Esophagus muscularis mucosa (tissue), 4 donors: ENCODE measurements at regions of chr17 and their contacts with region 1.

Region 1: DNA sequence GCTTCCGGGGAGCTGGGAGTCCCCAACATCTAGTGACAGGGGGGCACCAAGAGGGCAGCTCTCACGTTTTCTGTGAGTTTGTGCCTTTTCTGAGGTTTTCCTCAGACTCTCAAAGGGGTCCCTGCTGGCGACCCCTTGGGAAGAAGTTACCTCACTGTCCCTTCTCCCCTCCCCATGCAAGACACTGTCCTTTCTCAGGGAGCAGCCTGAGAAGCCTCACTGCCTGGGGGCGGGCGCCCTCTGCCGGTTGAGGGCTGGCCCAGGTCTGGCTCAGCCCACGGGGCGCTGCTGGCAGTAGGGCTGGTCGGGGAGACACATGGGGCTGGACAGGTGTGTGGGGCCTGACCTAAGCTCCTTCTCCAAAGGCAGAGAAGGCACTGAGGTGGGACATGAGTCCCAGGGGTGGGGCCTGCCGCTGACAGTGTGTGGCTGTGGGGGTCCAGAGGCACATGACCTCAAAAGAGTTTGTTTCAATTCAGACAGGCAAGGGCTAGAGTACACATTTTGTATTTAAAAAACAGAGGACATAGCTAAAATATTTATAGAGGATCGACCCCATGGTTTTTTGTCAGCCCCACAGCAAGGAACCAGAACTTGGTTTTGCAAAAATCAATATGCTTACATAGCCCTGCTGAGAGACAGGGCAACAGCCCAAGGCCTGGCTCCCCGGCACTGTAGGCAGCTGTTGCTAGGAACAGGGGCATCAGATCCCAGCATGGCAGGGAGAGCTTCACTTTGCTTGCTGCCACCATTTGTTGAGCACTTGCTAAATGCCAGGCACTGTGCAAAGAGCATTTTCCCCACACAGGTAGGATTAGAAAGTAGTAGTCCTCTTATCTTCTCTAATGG is 18.5 kb upstream of the ALDH3A1 start:
- DNase-seq: peak; percentile 92
- H3K4me3 ChIP-seq: no peak overlapping the region
- H3K27ac ChIP-seq: no peak overlapping the region
- H3K4me1 ChIP-seq: peaks cover 0 to 31% (median 18%) of the 10 kb centered on the region in 4 donors
- H3K27me3 ChIP-seq: no peaks in the 10 kb centered on the region
- CTCF ChIP-seq: peak in 2 of 3 experiments; percentile 91 to 95
- EP300 ChIP-seq: no peak
- POLR2A ChIP-seq: no peak

Region 2: GRCh38 chr17:19513897-19514488 is 252.7 kb before region 1 on chr17:
- intact Hi-C with region 1: loop called (anchors 2 kb)
- DNase-seq: no peak
- H3K4me3 ChIP-seq: no peak overlapping the region
- H3K27ac ChIP-seq: peak overlapping the region in 3 of 4 donors; percentile 25 to 33 (median 30)
- H3K4me1 ChIP-seq: peaks cover 0 to 11% (median 2%) of the 10 kb centered on the region in 4 donors
- H3K27me3 ChIP-seq: no peaks in the 10 kb centered on the region
- CTCF ChIP-seq: peak; percentile 88 to 92 (median 92)
- EP300 ChIP-seq: no peak
- POLR2A ChIP-seq: no peak

Region 3: GRCh38 chr17:19672009-19672750 is 94.5 kb before region 1 on chr17:
- intact Hi-C with region 1: no loop called
- DNase-seq: no peak
- H3K4me3 ChIP-seq: no peak overlapping the region
- H3K27ac ChIP-seq: peak overlapping the region in 1 of 4 donors; percentile 16
- H3K4me1 ChIP-seq: peaks cover 3 to 20% (median 14%) of the 10 kb centered on the region in 4 donors
- H3K27me3 ChIP-seq: no peaks in the 10 kb centered on the region
- CTCF ChIP-seq: no peak
- EP300 ChIP-seq: no peak
- POLR2A ChIP-seq: no peak

Region 4: DNA sequence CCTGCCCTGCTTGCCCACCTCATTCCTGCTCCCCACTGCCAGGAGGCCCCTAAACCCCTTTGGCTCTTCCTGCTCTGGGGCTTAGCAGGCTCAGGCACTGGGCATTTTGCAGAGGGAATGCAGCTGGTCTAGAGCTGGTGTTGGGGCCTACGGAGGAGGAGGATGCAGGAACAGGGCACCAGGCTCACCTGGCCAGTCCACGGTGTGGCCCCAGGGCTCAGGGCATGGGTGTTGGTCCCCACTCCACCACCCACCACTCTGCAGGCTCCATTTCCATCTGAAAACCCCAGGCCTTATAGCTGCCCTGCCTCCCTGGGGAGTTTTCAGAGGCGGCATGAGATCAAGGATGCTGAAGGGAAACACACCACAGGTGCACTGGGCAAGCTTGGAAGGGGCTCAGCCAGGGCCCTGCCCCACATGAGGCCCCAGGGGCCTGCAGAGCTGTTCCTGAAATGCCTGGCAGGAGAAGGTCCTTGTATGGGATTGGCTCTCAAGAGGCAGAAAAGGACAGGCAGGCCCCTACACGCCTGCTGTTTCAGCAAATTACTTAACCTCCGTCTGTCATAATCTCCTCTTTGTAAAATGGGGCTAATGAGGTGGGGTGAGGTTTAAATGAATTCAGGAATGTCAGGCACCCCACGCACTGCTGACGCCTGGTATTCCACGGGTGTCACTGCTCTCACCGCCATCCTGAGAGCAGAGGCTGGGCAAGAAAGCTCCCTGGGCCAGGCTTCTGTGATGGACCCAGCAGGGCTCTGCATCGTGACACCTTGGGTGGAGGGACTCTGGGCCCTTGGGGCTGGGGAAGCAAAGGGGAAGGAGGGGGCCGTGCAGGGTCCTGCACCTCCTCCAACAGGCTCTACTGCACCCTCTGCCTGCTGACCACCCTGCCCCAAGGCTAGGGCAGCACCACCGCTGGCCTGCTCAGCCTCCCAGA is 59.6 kb before region 1 on chr17:
- intact Hi-C with region 1: no loop called
- DNase-seq: no peak
- H3K4me3 ChIP-seq: no peak overlapping the region
- H3K27ac ChIP-seq: no peak overlapping the region
- H3K4me1 ChIP-seq: peaks cover 6 to 24% (median 8%) of the 10 kb centered on the region in 4 donors
- H3K27me3 ChIP-seq: no peaks in the 10 kb centered on the region
- CTCF ChIP-seq: no peak
- EP300 ChIP-seq: no peak
- POLR2A ChIP-seq: no peak